Posterior cingulate gyrus (tissue), 11 donors: ENCODE measurements at regions of chr9 and their contacts with region 1.

Region 1: GRCh38 chr9:107749787-107750444 is 260.3 kb upstream of the KLF4 start:
- DNase-seq: peak; percentile 68 to 96 (median 80)

Region 2: GRCh38 chr9:107489687-107490605 is 260.0 kb before region 1 on chr9 and contains the start of gene KLF4:
- intact Hi-C with region 1: loop called (anchors 2 kb)
- DNase-seq: peak; percentile 65 to 97 (median 78)

Region 3: GRCh38 chr9:107637421-107638420 is 112.2 kb before region 1 on chr9:
- intact Hi-C with region 1: loop called (anchors 2 kb)
- DNase-seq: peak; percentile 57 to 94 (median 69)

Region 4: GRCh38 chr9:107918749-107919148 is 168.8 kb after region 1 on chr9:
- intact Hi-C with region 1: no loop called
- DNase-seq: peak in 1 of 10 donors; percentile 81

Region 5: GRCh38 chr9:108439911-108440315 is 690.0 kb after region 1 on chr9:
- intact Hi-C with region 1: loop called (anchors 10 kb)
- DNase-seq: no peak